ENCODE measurements at regions of chr7 and their contacts with region 1.

Region 1: DNA sequence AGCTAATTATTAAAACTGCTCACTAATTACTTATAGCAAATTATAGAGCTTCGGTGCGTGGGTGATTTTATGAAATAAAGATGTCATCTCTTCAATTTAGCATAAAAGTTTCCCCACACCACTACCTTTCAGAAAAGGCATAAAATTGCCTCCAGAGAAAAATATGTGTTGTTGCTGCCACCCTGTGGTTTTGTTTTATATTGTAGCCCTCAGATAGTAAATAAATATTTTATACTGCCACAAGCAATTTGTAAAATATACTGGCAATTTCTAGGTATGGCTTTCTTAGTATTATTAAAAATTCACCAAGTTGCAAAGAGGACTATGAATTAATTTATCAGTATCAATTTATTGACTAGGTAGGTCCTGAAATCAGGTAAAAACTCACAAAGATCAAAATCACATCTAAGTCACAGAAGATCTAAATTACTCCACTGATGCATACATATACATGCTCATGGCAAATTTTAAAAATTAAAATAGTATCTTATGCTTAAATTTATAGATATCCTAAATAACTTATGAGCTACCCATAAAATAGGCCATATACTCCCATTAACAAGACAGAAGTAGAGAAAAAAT is 26.5 kb downstream of the ASNS start:
- DNase-seq: no peak
- H3K4me3 Mint-ChIP-seq: no peak overlapping the region
- H3K27ac Mint-ChIP-seq: no peak overlapping the region
- H3K4me1 Mint-ChIP-seq: no peaks in the 10 kb centered on the region
- H3K27me3 Mint-ChIP-seq: peaks cover 4% of the 10 kb centered on the region

Region 2: GRCh38 chr7:97104719-97105238 is 740.9 kb before region 1 on chr7:
- CTCF ChIA-PET with region 1: interaction called, 12 read pairs
- POLR2A ChIA-PET with region 1: no interaction called
- intact Hi-C with region 1: loop called (anchors 2 kb)
- DNase-seq: peak; percentile 80
- H3K4me3 Mint-ChIP-seq: no peak overlapping the region
- H3K27ac Mint-ChIP-seq: no peak overlapping the region
- H3K4me1 Mint-ChIP-seq: no peaks in the 10 kb centered on the region
- H3K27me3 Mint-ChIP-seq: peaks cover 12% of the 10 kb centered on the region

Measured in activated CD4-positive, alpha-beta memory T cell treated with anti-CD3 and anti-CD28 coated beads for 36 hours (primary cell).